Activated T-helper 2 cell treated with anti-CD3 and anti-CD28 coated beads, Interferon-gamma antibody, Interleukin-2, Interleukin-4, amounts not matched to agents 10 μg/mL and 5 μg/mL and 100 μg/mL, durations not matched to agents 14 hours and 24 hours and 36 hours (primary cell): ENCODE measurements at regions of chr6 and their contacts with region 1.

Region 1: GRCh38 chr6:135114355-135115145 is 59.9 kb upstream of the HBS1L start:
- DNase-seq: peak; percentile 45
- H3K4me3 Mint-ChIP-seq: peak overlapping the region; percentile 58
- H3K27ac Mint-ChIP-seq: peak overlapping the region; percentile 95
- H3K4me1 Mint-ChIP-seq: peaks cover 81% of the 10 kb centered on the region
- H3K27me3 Mint-ChIP-seq: no peaks in the 10 kb centered on the region

Region 2: DNA sequence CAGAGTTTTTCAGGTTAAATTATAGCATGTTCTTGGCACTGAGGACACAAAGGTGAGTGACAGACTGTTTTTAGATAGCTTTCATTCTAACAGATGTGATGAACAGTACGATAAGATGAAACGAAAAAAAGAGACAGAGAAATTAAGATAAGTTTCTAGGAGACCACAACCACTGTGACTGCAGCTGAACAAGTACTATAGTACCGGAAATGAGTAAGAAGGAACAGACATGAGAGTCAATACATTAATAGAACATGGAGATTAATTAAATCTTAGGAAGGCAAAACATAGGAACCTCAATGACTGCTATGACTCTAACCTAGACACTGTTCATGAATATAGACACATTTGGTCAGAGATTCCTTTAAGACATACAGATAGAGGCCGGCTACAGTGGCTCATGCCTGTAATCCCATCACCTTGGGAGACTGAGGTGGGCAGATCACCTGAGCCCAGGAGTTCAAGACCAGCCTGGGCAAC is 100.2 kb before region 1 on chr6:
- intact Hi-C with region 1: loop called (anchors 1 kb)
- DNase-seq: no peak
- H3K4me3 Mint-ChIP-seq: peak overlapping the region; percentile 30
- H3K27ac Mint-ChIP-seq: peak overlapping the region; percentile 91
- H3K4me1 Mint-ChIP-seq: peaks cover 57% of the 10 kb centered on the region
- H3K27me3 Mint-ChIP-seq: no peaks in the 10 kb centered on the region

Region 3: GRCh38 chr6:135054569-135055498 is 59.7 kb before region 1 on chr6 and contains the start of gene HBS1L:
- intact Hi-C with region 1: loop called (anchors 1 kb)
- DNase-seq: peak; percentile 98
- H3K4me3 Mint-ChIP-seq: peak within 1 kb of the TSS; percentile 97
- H3K27ac Mint-ChIP-seq: peak within 1 kb of the TSS; percentile 97
- H3K4me1 Mint-ChIP-seq: peaks cover 36% of the 10 kb centered on the region
- H3K27me3 Mint-ChIP-seq: no peaks in the 10 kb centered on the region
- total RNA-seq, gene HBS1L: 99.2 and 102 TPM in 2 replicates

Region 4: GRCh38 chr6:135128268-135128914 is 13.8 kb after region 1 on chr6:
- intact Hi-C with region 1: loop called (anchors 1 kb)
- DNase-seq: peak; percentile 55
- H3K4me3 Mint-ChIP-seq: peak overlapping the region; percentile 57
- H3K27ac Mint-ChIP-seq: peak overlapping the region; percentile 95
- H3K4me1 Mint-ChIP-seq: peaks cover 47% of the 10 kb centered on the region
- H3K27me3 Mint-ChIP-seq: no peaks in the 10 kb centered on the region

Region 5: DNA sequence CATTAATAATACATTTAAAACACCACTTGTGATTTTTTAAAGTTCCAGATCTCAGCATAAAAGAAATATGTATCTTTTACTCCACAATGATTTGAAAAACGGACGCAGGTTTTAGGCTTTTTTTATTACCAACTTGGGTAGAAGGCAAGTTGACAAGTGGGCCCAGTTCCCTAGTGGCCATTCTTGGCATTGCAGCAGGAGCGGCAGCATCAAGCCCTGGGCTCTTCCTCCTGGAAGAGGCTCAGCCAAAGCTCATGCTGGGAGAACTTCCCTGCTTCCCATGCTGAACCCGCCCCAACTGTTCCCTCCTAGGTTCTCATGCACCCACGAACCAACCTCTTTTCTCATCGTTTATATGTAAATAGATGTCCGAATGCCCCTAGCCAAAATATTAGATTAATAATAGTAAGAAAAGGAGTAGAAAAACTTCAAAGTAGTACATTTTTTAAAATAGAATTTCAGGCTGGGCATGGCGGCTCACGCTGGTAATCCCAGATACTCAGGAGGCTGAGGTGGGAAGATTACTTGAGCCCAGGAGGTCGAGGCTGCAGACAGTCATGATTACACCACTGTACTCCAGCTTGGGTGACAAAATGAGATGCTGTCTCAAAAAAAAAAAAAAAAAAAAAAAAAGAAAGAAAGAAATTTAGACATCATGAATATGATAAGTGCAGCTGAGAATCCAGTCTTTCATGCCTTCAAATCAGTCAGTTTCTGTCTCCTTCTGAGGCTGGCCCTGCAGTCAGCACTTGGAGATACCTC is 48.3 kb after region 1 on chr6:
- intact Hi-C with region 1: loop called (anchors 1 kb)
- DNase-seq: no peak
- H3K4me3 Mint-ChIP-seq: peak overlapping the region; percentile 31
- H3K27ac Mint-ChIP-seq: peak overlapping the region; percentile 98
- H3K4me1 Mint-ChIP-seq: peaks cover 66% of the 10 kb centered on the region
- H3K27me3 Mint-ChIP-seq: no peaks in the 10 kb centered on the region

Region 6: DNA sequence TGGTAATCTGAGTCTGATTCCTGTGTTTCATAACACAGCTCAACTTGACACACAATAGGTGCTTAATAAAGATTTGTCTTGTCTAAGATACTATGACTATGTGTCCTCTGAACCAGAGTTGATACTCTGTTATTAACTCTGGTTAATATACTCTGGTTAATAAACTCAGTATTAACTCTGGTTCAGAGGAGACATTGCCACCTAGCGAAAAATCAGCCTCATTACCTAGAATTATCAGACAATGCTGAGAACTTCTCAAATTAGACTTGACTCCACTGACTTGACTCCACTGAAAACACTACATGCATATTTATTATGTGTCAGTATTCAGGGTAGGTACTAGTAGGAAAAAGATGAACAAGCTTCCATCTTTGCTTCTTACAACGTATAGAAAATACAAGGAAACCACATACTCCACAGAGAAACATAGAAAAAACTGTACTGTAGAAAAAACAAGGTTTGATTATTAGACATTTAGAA is 309.1 kb after region 1 on chr6:
- intact Hi-C with region 1: loop called (anchors 1 kb)
- DNase-seq: no peak
- H3K4me3 Mint-ChIP-seq: no peak overlapping the region
- H3K27ac Mint-ChIP-seq: peak overlapping the region; percentile 38
- H3K4me1 Mint-ChIP-seq: peaks cover 32% of the 10 kb centered on the region
- H3K27me3 Mint-ChIP-seq: no peaks in the 10 kb centered on the region